ENCODE measurements at regions of chr5 and their contacts with region 1.

Region 1: DNA sequence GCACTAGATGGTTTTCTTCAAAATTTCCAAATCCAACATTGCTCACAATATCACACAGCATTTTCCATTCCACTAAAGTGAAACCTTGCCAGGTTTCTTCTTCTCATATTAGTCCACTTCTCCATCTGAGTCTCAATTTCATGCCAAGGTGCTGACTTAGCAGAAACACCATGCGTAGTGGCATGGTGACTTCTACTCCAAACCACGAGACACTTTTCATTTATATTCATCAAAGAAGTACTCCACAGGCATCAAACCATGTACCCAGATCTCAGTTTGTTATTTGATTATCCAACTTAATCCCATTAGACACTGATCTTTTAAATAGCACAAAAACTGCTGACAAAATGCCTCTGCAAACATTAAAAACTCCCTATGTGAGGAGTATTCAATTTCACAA is 233.4 kb upstream of the ITGA1 start:
- DNase-seq: no peak
- ATAC-seq: no peak
- H3K4me3 Mint-ChIP-seq: no peak overlapping the region
- H3K27ac Mint-ChIP-seq: no peak overlapping the region
- H3K4me1 Mint-ChIP-seq: no peaks in the 10 kb centered on the region
- H3K27me3 Mint-ChIP-seq: peaks cover 2% of the 10 kb centered on the region
- CTCF ChIP-seq: no peak

Region 2: DNA sequence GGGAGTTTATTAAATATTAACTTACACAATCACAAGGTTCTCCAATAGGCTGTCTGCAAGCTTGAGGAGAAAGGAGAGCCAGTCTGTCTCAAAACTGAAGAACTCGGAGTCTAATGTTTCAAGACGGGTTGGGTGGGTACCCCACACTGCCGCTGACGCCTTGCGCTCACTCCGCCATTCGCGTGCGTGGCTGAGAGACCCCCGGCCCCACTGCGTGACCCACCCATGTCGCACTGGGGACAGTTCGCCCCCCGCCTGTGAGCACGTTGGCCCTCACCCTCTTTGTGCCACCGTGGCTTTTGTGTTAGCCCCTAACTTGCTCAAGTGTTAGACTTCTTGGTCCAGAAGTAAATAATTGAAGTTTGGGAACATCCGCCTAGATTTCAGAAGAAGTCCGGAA is 36.6 kb before region 1 on chr5:
- CTCF ChIA-PET with region 1: no interaction called
- POLR2A ChIA-PET with region 1: no interaction called
- intact Hi-C with region 1: loop called (anchors 2 kb)
- DNase-seq: no peak
- ATAC-seq: no peak
- H3K4me3 Mint-ChIP-seq: no peak overlapping the region
- H3K27ac Mint-ChIP-seq: no peak overlapping the region
- H3K4me1 Mint-ChIP-seq: no peaks in the 10 kb centered on the region
- H3K27me3 Mint-ChIP-seq: peaks cover 1% of the 10 kb centered on the region
- CTCF ChIP-seq: no peak

Region 3: GRCh38 chr5:53170748-53171349 is 616.6 kb after region 1 on chr5:
- CTCF ChIA-PET with region 1: no interaction called
- POLR2A ChIA-PET with region 1: no interaction called
- intact Hi-C with region 1: no loop called
- DNase-seq: peak; percentile 22
- ATAC-seq: peak; percentile 65
- H3K4me3 Mint-ChIP-seq: no peak overlapping the region
- H3K27ac Mint-ChIP-seq: no peak overlapping the region
- H3K4me1 Mint-ChIP-seq: no peaks in the 10 kb centered on the region
- H3K27me3 Mint-ChIP-seq: peaks cover 9% of the 10 kb centered on the region
- CTCF ChIP-seq: peak; percentile 60

Measured in activated CD8-positive, alpha-beta T cell treated with anti-CD3 and anti-CD28 coated beads for 36 hours (primary cell).